A673 (cell line): ENCODE measurements at regions of chr6 and their contacts with region 1.

Region 1: GRCh38 chr6:1596088-1596852 is 13.4 kb upstream of the FOXC1 start:
- DNase-seq: peak; percentile 64
- H3K4me3 ChIP-seq: peak overlapping the region; percentile 37
- H3K27ac ChIP-seq: no peak overlapping the region
- H3K4me1 ChIP-seq: peaks cover 3% of the 10 kb centered on the region
- H3K27me3 ChIP-seq: peaks cover 46% of the 10 kb centered on the region
- CTCF ChIP-seq: peak; percentile 91

Region 2: DNA sequence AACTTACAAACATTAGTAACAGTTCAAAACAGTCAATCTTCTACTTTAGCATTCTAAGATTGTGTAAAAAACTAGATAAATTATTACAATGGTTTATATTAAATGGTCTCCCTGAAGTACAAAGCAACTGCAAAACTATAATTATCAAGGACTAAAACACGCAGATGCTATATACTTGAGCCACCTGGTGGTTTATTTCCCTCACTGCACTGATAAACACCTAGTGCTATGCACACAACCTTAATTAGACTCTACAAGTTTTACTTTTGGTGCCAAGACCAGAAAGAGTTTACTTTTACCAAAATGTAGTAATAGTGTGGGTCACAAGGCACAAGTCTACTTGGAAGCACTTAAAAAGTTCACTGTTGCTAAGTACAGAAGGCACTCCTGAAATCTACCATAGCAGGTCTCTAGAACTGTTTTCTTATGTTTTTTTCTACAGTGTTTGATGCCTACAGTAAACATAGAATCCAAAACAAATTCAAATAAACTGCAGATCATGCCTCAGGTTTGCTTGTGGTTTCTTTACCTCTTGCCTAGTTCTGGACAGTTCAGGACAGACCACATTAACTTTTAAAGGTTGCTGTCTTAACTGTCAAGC is 599.9 kb after region 1 on chr6:
- CTCF ChIA-PET with region 1: no interaction called
- POLR2A ChIA-PET with region 1: no interaction called
- intact Hi-C with region 1: loop called (anchors 1 kb)
- DNase-seq: peak; percentile 70
- H3K4me3 ChIP-seq: no peak overlapping the region
- H3K27ac ChIP-seq: no peak overlapping the region
- H3K4me1 ChIP-seq: no peaks in the 10 kb centered on the region
- H3K27me3 ChIP-seq: no peaks in the 10 kb centered on the region
- CTCF ChIP-seq: peak; percentile 84

Region 3: DNA sequence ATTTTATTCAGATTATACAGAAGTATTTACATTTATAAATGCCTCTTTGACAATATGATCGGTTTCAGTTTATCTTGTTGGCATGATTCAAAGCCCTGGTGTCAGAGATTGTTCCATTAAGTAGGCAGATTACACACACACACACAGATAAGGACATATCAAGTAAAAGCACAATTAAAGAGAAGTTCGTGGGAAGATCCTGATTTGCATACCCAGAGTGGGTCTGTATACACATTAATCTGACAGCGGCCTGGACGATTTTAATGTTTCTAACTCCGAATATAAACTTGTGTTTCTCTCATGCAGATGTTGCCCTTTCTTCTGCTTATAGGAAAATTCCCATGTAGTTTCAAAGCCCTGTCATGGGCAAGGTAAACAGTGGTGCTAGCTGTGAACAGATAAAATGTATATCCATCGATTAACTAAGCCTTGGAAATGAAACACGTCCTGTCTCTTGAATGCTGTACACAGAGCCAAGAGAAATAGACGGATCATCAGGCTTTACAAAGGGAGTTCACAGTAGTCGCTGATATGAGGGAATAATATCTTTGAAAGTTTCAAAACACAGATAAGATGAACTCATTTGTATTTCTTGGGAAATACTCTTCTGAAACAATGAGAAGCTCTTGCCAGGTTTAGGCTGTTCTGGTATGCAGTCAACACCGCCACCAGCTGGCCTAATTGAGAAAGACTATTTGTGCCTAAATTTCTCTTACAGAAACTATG is 757.3 kb after region 1 on chr6:
- CTCF ChIA-PET with region 1: interaction called, 7 read pairs
- POLR2A ChIA-PET with region 1: no interaction called
- intact Hi-C with region 1: loop called (anchors 2 kb)
- DNase-seq: peak; percentile 74
- H3K4me3 ChIP-seq: no peak overlapping the region
- H3K27ac ChIP-seq: no peak overlapping the region
- H3K4me1 ChIP-seq: no peaks in the 10 kb centered on the region
- H3K27me3 ChIP-seq: no peaks in the 10 kb centered on the region
- CTCF ChIP-seq: peak; percentile 84

Region 4: GRCh38 chr6:2448820-2449571 is 852.7 kb after region 1 on chr6:
- CTCF ChIA-PET with region 1: no interaction called
- POLR2A ChIA-PET with region 1: no interaction called
- intact Hi-C with region 1: loop called (anchors 5 kb)
- DNase-seq: peak; percentile 67
- H3K4me3 ChIP-seq: no peak overlapping the region
- H3K27ac ChIP-seq: no peak overlapping the region
- H3K4me1 ChIP-seq: no peaks in the 10 kb centered on the region
- H3K27me3 ChIP-seq: peaks cover 22% of the 10 kb centered on the region
- CTCF ChIP-seq: peak; percentile 74

Region 5: GRCh38 chr6:2634139-2634964 is 1038.1 kb after region 1 on chr6:
- CTCF ChIA-PET with region 1: interaction called, 5 read pairs
- POLR2A ChIA-PET with region 1: no interaction called
- intact Hi-C with region 1: loop called (anchors 2 kb)
- DNase-seq: peak; percentile 88
- H3K4me3 ChIP-seq: peak overlapping the region; percentile 36
- H3K27ac ChIP-seq: no peak overlapping the region
- H3K4me1 ChIP-seq: peaks cover 6% of the 10 kb centered on the region
- H3K27me3 ChIP-seq: no peaks in the 10 kb centered on the region
- CTCF ChIP-seq: peak; percentile 98

Region 6: GRCh38 chr6:2749969-2750600 is 1153.8 kb after region 1 on chr6:
- CTCF ChIA-PET with region 1: no interaction called
- POLR2A ChIA-PET with region 1: no interaction called
- intact Hi-C with region 1: loop called (anchors 5 kb)
- DNase-seq: peak; percentile 78
- H3K4me3 ChIP-seq: no peak overlapping the region
- H3K27ac ChIP-seq: no peak overlapping the region
- H3K4me1 ChIP-seq: peaks cover 46% of the 10 kb centered on the region
- H3K27me3 ChIP-seq: no peaks in the 10 kb centered on the region
- CTCF ChIP-seq: peak; percentile 90